Ovary (tissue), 10 donors: ENCODE measurements at regions of chr6 and their contacts with region 1.

Region 1: GRCh38 chr6:30130887-30131862 is 4.8 kb upstream of the TRIM40 start:
- DNase-seq: peak; percentile 38 to 58 (median 54)
- H3K4me3 ChIP-seq: no peak overlapping the region
- H3K27ac ChIP-seq: no peak overlapping the region
- H3K4me1 ChIP-seq: no peaks in the 10 kb centered on the region
- H3K27me3 ChIP-seq: peaks cover 5% of the 10 kb centered on the region
- CTCF ChIP-seq: peak; percentile 82 to 91 (median 87)
- EP300 ChIP-seq: no peak
- POLR2A ChIP-seq: no peak

Region 2: DNA sequence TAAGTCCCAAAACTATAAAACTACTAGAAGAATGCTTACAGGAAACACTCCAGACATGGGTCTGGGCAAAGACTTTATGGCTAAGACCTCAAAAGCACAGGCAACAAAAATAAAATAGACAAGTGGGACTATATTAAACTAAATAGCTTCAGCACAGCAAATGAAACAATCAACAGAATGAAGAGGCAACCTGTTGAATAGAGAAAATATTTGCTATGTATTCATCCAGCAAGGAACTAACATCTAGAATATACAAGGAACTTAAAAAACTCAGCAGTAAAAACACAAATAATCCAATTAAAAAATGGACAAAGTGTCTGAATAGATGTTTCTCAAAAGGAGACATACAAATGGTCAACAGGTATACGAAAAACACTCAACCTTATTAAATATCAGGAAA is 273.2 kb before region 1 on chr6:
- intact Hi-C with region 1: loop called in 1 of 4 experiments (anchors 5 kb)
- DNase-seq: no peak
- H3K4me3 ChIP-seq: no peak overlapping the region
- H3K27ac ChIP-seq: no peak overlapping the region
- H3K4me1 ChIP-seq: no peaks in the 10 kb centered on the region
- H3K27me3 ChIP-seq: no peaks in the 10 kb centered on the region
- CTCF ChIP-seq: no peak
- EP300 ChIP-seq: no peak
- POLR2A ChIP-seq: no peak

Region 3: GRCh38 chr6:30037182-30037788 is 93.9 kb before region 1 on chr6:
- intact Hi-C with region 1: no loop called
- DNase-seq: no peak
- H3K4me3 ChIP-seq: no peak overlapping the region
- H3K27ac ChIP-seq: no peak overlapping the region
- H3K4me1 ChIP-seq: no peaks in the 10 kb centered on the region
- H3K27me3 ChIP-seq: no peaks in the 10 kb centered on the region
- CTCF ChIP-seq: peak in 1 of 3 donors; percentile 42
- EP300 ChIP-seq: no peak
- POLR2A ChIP-seq: no peak

Region 4: GRCh38 chr6:30102970-30103874 is 28.0 kb before region 1 on chr6:
- intact Hi-C with region 1: loop called in 1 of 4 experiments (anchors 2 kb)
- DNase-seq: peak; percentile 75 to 88 (median 77)
- H3K4me3 ChIP-seq: peak overlapping the region; percentile 30
- H3K27ac ChIP-seq: no peak overlapping the region
- H3K4me1 ChIP-seq: peaks cover 14% of the 10 kb centered on the region
- H3K27me3 ChIP-seq: no peaks in the 10 kb centered on the region
- CTCF ChIP-seq: peak; percentile 59 to 70 (median 68)
- EP300 ChIP-seq: no peak
- POLR2A ChIP-seq: no peak

Region 5: GRCh38 chr6:30192076-30192475 is 60.9 kb after region 1 on chr6:
- intact Hi-C with region 1: no loop called
- DNase-seq: no peak
- H3K4me3 ChIP-seq: no peak overlapping the region
- H3K27ac ChIP-seq: no peak overlapping the region
- H3K4me1 ChIP-seq: no peaks in the 10 kb centered on the region
- H3K27me3 ChIP-seq: no peaks in the 10 kb centered on the region
- CTCF ChIP-seq: no peak
- EP300 ChIP-seq: no peak
- POLR2A ChIP-seq: no peak